ENCODE measurements at regions of chr11 and their contacts with region 1.

Region 1: DNA sequence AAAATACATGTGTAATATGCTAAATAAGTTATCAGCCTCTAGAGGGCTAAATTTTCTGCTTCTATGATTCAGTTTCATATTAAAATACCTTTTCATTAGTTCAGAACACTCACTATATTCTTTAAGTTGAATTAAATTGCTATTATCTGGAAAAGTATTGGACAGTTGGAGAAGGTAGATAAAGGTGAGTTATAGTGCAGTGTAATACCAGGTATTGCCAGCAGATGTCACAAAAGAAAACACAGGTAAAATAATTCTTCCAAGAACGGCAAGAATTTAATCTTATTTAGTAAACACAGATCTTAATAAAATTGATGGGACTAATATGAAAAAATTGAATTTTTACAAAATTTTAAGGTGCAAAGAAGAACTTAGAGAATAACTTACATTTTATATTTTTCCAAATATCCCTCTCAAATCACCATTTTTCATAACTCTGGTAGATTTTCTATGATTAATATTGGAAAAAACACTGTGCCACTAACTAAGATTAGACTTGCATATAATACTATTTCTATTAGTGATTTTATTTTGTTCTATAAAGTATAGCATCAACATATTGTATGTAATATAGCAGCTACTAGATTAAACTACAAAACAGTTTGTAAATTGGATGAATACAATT is 1.7 kb upstream of the LRRC4C start:
- DNase-seq: no peak
- ATAC-seq: no peak
- H3K4me3 Mint-ChIP-seq: no peak overlapping the region
- H3K27ac Mint-ChIP-seq: no peak overlapping the region
- H3K4me1 Mint-ChIP-seq: peaks cover 43% of the 10 kb centered on the region
- H3K27me3 Mint-ChIP-seq: no peaks in the 10 kb centered on the region; the same call in 1 of the 2 replicates
- CTCF ChIP-seq: peak; percentile 69

Region 2: DNA sequence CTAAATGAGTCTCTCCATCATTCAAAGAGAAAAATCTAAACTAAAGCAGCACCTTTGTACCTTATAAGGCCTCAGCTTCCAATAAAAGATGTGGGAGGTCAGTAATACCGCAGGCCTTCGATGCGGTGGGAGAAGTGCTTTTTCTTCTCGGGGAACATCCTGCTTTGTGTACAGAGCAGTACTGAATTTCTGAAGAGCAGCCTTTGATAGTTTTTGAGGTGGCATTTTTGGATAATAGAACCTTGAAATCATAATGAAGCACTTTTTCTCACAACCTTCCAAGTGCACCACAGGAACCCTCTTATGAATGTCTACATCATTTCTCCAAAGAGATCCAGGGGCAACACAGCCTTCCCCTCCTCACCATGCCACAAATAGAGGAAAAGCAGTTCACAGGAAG is 41.3 kb before region 1 on chr11:
- CTCF ChIA-PET with region 1: no interaction called
- POLR2A ChIA-PET with region 1: no interaction called
- DNase-seq: no peak
- ATAC-seq: no peak
- H3K4me3 Mint-ChIP-seq: no peak overlapping the region
- H3K27ac Mint-ChIP-seq: no peak overlapping the region
- H3K4me1 Mint-ChIP-seq: peaks cover 6% of the 10 kb centered on the region
- H3K27me3 Mint-ChIP-seq: no peaks in the 10 kb centered on the region
- CTCF ChIP-seq: no peak

Region 3: DNA sequence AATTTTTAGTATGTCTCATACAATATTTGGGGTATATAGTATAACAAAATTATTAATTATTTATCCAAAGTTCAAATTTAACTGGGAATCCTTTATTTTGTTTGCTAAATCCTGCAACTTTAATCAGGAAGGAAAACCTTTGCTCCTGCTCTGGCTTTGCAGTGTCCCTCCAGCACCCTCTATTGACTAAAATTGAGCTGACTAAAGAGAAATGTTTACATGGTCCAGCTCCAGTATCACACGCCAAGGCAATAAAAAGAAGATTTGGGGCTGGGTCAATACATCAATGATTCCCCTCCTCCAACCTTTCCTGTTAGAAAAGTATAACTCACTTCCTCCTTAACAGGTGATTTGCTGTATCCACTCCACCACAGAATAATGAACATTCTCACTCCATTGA is 151.2 kb after region 1 on chr11:
- CTCF ChIA-PET with region 1: interaction called, 16 read pairs
- POLR2A ChIA-PET with region 1: no interaction called
- DNase-seq: no peak
- ATAC-seq: peak; percentile 36; the same call in 1 of the 2 replicates
- H3K4me3 Mint-ChIP-seq: no peak overlapping the region
- H3K27ac Mint-ChIP-seq: no peak overlapping the region
- H3K4me1 Mint-ChIP-seq: no peaks in the 10 kb centered on the region
- H3K27me3 Mint-ChIP-seq: no peaks in the 10 kb centered on the region; the same call in 1 of the 2 replicates
- CTCF ChIP-seq: no peak

Region 4: DNA sequence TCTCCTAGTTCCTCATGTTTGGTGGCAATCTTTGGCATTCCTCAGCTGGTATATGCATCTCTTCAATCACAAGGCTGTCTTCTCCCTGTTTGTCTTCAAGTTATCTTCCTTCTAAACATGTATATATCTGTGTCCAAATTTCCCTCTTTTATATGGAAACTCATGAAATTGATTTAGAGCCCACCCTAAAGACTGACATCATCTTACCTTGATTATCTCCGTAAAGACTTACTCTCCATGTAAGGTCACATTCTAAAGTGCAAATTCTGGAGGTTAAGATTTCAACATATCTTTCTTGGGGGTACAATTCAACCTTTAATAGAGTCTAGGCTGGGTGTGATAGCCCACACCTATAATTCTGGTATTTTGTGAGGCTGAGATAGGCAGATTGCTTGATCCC is 214.0 kb after region 1 on chr11:
- CTCF ChIA-PET with region 1: no interaction called
- POLR2A ChIA-PET with region 1: no interaction called
- DNase-seq: no peak
- ATAC-seq: no peak
- H3K4me3 Mint-ChIP-seq: no peak overlapping the region
- H3K27ac Mint-ChIP-seq: no peak overlapping the region
- H3K4me1 Mint-ChIP-seq: no peaks in the 10 kb centered on the region
- H3K27me3 Mint-ChIP-seq: no peaks in the 10 kb centered on the region
- CTCF ChIP-seq: no peak

Region 5: DNA sequence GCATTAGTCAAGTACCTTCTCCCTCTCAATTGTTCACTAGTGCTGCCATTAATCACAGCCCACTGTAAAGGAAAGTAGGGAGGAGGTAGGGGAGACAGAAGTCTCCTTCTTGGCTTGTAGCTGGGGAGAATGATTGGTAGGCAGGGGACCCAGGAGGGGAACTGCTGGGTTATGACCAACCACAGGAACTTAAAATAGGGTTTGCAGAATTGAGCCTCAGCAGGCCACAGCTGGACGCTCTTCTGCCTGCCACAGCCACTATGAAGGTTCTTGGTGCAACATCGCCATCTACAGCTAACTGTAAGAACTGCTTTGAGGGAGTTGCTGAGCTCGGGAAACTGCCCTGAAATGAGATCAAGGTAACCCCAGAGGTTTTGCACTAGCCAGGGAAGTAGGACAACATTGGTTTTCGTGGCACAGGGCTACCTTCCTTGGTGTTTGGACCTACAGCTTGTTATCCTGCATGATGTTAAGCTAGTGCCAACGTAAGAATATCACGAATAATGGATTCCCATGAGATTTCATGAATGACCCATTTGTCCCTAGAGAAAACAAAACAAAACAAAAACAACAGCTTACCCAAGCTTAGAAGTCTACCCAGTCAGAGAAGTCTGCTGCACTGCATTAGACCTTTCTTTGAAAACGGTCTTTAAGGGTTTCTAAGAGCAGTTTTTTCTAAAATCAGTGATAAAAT is 1063.5 kb after region 1 on chr11:
- CTCF ChIA-PET with region 1: interaction called, 17 read pairs
- POLR2A ChIA-PET with region 1: no interaction called
- DNase-seq: peak; percentile 59
- ATAC-seq: peak; percentile 90
- H3K4me3 Mint-ChIP-seq: no peak overlapping the region
- H3K27ac Mint-ChIP-seq: no peak overlapping the region
- H3K4me1 Mint-ChIP-seq: peaks cover 27% of the 10 kb centered on the region
- H3K27me3 Mint-ChIP-seq: no peaks in the 10 kb centered on the region
- CTCF ChIP-seq: peak; percentile 81

Measured in WTC11 (cell line).